Activated CD8-positive, alpha-beta T cell treated with anti-CD3 and anti-CD28 coated beads for 36 hours (primary cell): ENCODE measurements at regions of chr2 and their contacts with region 1.

Region 1: DNA sequence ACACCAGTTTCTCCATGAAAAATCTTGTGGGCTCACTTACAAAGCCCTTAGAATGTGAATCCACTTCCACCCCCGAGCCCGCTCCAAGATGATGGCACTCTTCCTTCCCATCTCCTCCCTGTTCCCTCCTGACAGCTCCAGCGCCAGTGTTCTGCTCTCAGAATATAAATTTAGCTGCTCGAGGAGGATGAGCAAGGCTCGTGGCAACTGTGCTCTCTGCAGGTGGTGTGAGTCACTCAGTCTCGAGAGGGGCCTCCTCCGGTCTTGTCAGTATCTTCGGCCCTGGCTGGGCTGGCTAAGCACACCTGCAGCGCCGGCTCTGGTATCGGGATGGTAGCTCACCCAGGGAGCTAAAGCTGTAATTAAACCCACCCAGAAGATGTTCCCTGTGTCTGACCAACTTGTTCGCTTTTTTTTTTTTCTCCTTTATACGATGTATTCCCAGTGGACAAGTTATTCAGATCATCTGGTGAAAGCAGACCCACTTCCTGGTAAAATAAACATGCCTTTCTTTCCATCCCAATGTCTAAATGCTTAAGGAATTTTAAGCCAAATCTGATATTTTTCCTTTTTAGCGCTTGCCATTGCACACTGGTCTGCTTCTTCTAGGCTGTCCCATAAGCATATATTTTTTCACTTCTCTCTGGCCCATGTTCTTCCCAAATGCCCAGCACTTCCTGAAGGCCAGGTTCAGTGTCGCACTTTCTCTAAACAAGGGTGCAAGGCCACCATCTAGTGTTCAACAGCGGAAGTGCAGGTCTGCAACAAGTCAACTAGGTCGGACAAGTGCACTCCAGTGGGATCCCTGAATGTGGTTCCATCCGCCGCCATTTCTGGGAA is 31.4 kb upstream of the YPEL5 start:
- DNase-seq: peak; percentile 84
- ATAC-seq: peak; percentile 69
- H3K4me3 Mint-ChIP-seq: no peak overlapping the region
- H3K27ac Mint-ChIP-seq: no peak overlapping the region
- H3K4me1 Mint-ChIP-seq: peaks cover 11% of the 10 kb centered on the region
- H3K27me3 Mint-ChIP-seq: no peaks in the 10 kb centered on the region
- CTCF ChIP-seq: peak; percentile 98

Region 2: GRCh38 chr2:30072250-30072842 is 43.0 kb before region 1 on chr2:
- CTCF ChIA-PET with region 1: interaction called, 11 read pairs
- POLR2A ChIA-PET with region 1: no interaction called
- intact Hi-C with region 1: no loop called
- DNase-seq: peak; percentile 82
- ATAC-seq: peak; percentile 91
- H3K4me3 Mint-ChIP-seq: no peak overlapping the region
- H3K27ac Mint-ChIP-seq: no peak overlapping the region
- H3K4me1 Mint-ChIP-seq: no peaks in the 10 kb centered on the region
- H3K27me3 Mint-ChIP-seq: peaks cover 22% of the 10 kb centered on the region
- CTCF ChIP-seq: peak; percentile 82

Region 3: DNA sequence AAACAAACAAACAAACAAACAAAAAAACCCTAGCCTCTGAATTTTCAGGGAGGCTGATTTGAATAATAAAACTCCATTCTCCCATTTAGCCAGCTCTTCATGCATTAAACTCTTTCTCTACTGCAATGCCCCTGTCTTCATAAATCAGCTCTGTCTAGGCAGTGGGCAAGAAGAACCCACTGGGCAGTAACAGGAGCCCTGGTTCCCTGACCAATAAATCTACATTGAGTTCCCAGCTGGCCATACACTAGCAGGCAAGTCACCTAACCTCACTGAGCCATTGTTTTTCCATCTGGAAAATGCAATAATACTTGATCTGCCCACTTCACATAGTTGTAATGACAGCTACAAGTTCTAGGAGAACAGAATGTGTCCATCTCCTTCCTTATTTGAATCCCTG is 26.2 kb before region 1 on chr2:
- CTCF ChIA-PET with region 1: interaction called, 24 read pairs
- POLR2A ChIA-PET with region 1: no interaction called
- intact Hi-C with region 1: loop called (anchors 2 kb)
- DNase-seq: no peak
- ATAC-seq: no peak
- H3K4me3 Mint-ChIP-seq: no peak overlapping the region
- H3K27ac Mint-ChIP-seq: no peak overlapping the region
- H3K4me1 Mint-ChIP-seq: no peaks in the 10 kb centered on the region
- H3K27me3 Mint-ChIP-seq: peaks cover 24% of the 10 kb centered on the region
- CTCF ChIP-seq: no peak

Region 4: DNA sequence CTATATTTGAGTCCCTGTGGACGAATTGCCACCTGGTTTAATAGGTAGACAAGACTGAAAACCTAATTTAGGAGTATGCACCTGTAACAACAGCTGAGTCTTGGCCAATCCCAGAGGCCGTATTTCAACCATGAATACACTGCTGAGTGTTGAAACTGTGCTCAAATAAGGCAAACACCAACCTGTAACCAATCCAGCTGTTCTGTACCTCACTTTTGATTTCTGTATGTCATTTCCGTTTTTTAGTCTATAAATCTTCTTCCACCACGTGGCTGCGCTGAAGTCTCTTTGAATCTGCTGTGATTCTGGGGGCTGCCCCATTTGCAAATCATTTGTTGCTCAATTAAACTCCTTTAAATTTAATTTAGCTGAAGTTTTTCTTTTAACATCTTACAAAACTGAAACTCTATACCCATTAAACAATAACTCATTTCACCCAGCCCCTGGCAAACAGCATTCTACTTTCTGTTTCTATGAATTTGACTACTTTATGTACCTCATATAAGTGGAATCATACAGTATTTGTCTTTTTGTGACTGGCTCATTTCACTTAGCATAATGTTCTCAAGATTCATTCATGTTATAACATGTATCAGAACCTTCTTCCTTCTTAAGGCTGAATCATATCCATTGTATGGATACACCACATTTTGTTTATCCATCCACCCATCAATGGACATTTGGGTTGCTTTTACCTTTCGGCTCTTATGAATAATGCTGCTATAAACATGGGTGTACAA is 23.9 kb after region 1 on chr2:
- CTCF ChIA-PET with region 1: interaction called, 12 read pairs
- POLR2A ChIA-PET with region 1: no interaction called
- intact Hi-C with region 1: no loop called
- DNase-seq: peak; percentile 73
- ATAC-seq: peak; percentile 77
- H3K4me3 Mint-ChIP-seq: peak overlapping the region; percentile 43
- H3K27ac Mint-ChIP-seq: peak overlapping the region; percentile 83
- H3K4me1 Mint-ChIP-seq: peaks cover 22% of the 10 kb centered on the region
- H3K27me3 Mint-ChIP-seq: peaks cover 2% of the 10 kb centered on the region
- CTCF ChIP-seq: no peak